MCF 10A (cell line): ENCODE measurements at regions of chrX and their contacts with region 1.

Region 1: DNA sequence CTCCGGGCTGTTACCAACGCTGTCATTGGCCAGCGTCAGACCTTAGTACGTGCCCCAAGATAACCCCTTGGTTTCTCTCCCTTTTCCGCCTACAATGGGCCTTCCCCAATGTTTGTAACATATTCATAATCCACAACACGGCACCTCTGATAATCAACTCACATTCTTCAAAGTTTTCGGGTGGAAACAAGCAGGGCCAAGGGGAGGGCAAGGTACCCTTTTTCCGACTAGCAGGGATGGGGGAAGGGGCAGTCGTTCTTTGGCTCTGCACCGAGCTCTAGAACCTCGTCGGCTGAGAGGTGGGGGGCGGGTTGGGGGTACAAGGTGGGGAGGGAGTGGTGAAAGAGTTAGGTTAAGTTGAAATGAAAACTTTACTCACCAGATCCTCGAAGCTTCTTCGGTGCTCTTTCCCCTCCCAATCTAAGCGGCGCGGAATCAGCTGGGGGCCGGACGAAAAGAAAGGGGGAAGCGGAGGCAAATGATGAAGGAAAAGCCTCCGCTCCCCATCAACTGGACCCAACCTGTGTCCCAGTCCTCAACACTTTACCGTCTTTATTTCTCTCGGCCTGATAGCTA is 1.4 kb downstream of the BRWD3 start:
- DNase-seq: peak; percentile 76
- H3K4me3 Mint-ChIP-seq: peak overlapping the region; percentile 85
- H3K27ac Mint-ChIP-seq: peak overlapping the region; percentile 33
- H3K4me1 Mint-ChIP-seq: no peaks in the 10 kb centered on the region
- H3K27me3 Mint-ChIP-seq: no peaks in the 10 kb centered on the region
- CTCF ChIP-seq: no peak

Region 2: GRCh38 chrX:81121513-81122382 is 313.5 kb after region 1 on chrX:
- CTCF ChIA-PET with region 1: interaction called, 4 read pairs
- POLR2A ChIA-PET with region 1: interaction called, 10 read pairs
- intact Hi-C with region 1: loop called (anchors 2 kb)
- DNase-seq: peak; percentile 94
- H3K4me3 Mint-ChIP-seq: peak overlapping the region; percentile 80
- H3K27ac Mint-ChIP-seq: peak overlapping the region; percentile 69
- H3K4me1 Mint-ChIP-seq: no peaks in the 10 kb centered on the region
- H3K27me3 Mint-ChIP-seq: no peaks in the 10 kb centered on the region
- CTCF ChIP-seq: no peak